Ovary (tissue), 10 donors: ENCODE measurements at regions of chr1 and their contacts with region 1.

Region 1: DNA sequence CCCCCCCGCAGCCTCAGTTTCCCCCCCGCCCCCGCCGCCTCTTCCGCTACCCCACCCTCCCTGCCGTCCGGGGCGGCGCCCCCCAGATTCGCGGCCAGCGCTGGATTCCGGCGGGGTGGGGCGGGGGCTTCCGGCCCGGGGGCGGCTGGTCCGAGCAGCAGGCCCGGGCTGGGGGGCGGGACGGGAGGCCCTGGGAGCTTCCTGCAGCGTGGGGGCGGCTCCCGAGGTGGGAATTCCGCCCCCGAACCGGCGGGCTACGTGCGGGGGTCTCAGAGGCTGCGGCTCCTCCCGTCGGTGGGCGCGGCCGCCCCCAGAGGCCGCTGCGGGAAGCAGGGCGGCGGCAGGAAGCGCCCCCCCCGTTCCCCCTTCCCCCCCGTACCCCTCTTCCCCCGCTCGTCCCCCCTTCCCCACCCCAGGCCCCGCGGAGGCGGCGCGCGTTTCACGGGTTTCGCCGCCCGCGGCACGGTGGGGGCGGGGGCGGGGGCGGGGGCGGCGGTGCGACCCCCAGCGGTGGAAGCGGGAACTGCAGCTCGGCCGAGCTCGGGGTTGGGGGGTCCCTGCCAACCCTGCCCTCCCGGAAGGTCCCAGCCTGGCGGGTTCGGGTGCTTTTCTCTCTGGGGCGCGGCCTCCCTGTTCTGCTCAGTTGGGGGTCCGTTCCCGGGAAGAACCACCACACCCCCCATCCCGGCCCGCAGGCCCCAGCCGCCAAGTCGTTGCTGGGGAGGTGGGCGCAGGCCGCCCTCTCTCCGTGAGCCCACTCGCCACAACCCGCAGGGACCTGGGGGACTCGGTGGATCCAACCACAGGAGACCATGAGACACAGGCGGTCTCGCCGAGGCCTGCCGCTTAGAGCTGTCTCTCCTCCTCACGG is 76.3 kb downstream of the MORN1 start:
- DNase-seq: peak; percentile 75 to 84 (median 83)
- H3K4me3 ChIP-seq: peak overlapping the region; percentile 54
- H3K27ac ChIP-seq: peak overlapping the region; percentile 61 to 75
- H3K4me1 ChIP-seq: peaks cover 25% of the 10 kb centered on the region
- H3K27me3 ChIP-seq: no peaks in the 10 kb centered on the region
- CTCF ChIP-seq: peak; percentile 68 to 95 (median 80)
- EP300 ChIP-seq: no peak
- POLR2A ChIP-seq: no peak

Region 2: DNA sequence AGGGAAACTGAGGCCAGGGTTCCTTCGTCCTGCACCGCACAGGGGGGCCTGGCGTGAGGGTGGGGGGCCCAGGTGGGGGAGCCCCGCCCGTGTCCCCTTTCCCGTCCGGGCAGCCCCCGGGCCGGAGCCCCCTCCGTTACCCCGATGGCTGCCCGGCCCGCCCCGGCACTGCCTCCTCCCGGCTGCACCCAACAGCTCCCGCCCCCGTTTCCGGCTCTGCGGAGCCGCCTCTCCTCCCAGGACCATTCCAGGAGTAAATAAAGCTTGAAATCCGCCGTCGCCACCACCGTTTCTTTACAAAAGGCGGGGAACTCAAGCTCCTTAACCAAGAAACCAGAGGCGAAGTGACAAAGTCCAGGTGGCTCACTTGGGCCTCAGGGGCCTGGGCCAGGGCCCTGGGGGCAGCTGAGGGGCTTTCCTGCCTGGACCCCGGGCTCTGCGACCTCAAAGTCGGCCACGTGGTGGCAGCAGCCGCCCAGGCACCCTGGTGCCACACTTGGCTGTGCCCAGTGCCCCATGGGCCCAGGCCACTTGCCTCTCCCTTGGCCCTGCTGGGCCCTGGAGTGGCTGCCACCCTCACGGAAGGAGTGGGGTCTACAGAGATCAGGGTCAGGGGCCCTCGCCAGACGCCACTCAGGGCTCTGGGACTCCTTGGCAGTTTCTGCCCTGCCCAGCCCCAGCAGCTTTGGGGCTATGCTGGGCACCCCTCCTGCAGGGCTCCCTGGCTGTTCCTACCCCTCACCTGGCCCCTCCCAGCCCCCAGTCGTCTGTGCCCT is 120.0 kb before region 1 on chr1:
- intact Hi-C with region 1: loop called (anchors 5 to 10 kb)
- DNase-seq: peak; percentile 89 to 92 (median 91)
- H3K4me3 ChIP-seq: peak overlapping the region; percentile 72
- H3K27ac ChIP-seq: peak overlapping the region; percentile 93 to 97
- H3K4me1 ChIP-seq: peaks cover 27% of the 10 kb centered on the region
- H3K27me3 ChIP-seq: no peaks in the 10 kb centered on the region
- CTCF ChIP-seq: peak; percentile 89 to 99 (median 93)
- EP300 ChIP-seq: no peak
- POLR2A ChIP-seq: peak; percentile 10

Region 3: GRCh38 chr1:2204516-2205190 is 110.4 kb before region 1 on chr1:
- intact Hi-C with region 1: loop called (anchors 5 to 10 kb)
- DNase-seq: peak; percentile 86 to 94 (median 90)
- H3K4me3 ChIP-seq: peak overlapping the region; percentile 40
- H3K27ac ChIP-seq: peak overlapping the region; percentile 78 to 84
- H3K4me1 ChIP-seq: peaks cover 26% of the 10 kb centered on the region
- H3K27me3 ChIP-seq: no peaks in the 10 kb centered on the region
- CTCF ChIP-seq: no peak
- EP300 ChIP-seq: no peak
- POLR2A ChIP-seq: peak; percentile 53